Right cardiac atrium (tissue), 5 donors: ENCODE measurements at regions of chr7 and their contacts with region 1.

Region 1: DNA sequence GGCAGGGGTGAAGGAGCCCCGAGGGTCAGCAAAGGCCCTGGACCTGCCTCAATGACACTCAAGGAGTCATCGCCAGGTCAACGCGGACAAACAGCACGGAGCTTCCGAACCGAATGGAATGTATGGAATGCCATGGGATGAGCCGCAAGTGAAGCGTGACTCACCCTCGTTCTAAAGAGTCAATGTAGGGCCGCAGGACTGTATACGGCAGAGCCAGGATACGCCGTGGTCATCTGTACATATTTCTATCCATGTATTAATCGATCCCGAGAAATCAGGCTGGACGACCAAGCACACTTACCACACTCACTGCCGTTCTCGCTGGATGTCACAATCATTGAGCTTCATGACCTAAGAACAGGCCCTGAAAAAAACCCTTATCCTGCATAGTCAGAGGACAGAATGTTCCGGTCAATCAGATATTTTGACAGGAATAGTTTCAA is 4.3 kb downstream of the SNX8 start:
- DNase-seq: no peak
- ATAC-seq: no peak
- H3K4me3 ChIP-seq: no peak overlapping the region
- H3K27ac ChIP-seq: peak overlapping the region; percentile 68
- H3K4me1 ChIP-seq: peaks cover 3% of the 10 kb centered on the region
- H3K27me3 ChIP-seq: no peaks in the 10 kb centered on the region

Region 2: GRCh38 chr7:2241580-2242540 is 68.0 kb before region 1 on chr7 and contains the starts of genes MRM2 and NUDT1:
- intact Hi-C with region 1: loop called in 1 of 4 experiments (anchors 10 kb)
- DNase-seq: peak; percentile 83 to 96 (median 93)
- ATAC-seq: peak; percentile 91
- H3K4me3 ChIP-seq: peak within 1 kb of the TSS; percentile 82
- H3K27ac ChIP-seq: peak within 1 kb of the TSS; percentile 55
- H3K4me1 ChIP-seq: peaks cover 4% of the 10 kb centered on the region
- H3K27me3 ChIP-seq: no peaks in the 10 kb centered on the region
- total RNA-seq, gene MRM2: 19.5 to 24.4 (median 21.9) TPM
- total RNA-seq, gene NUDT1: 10.6 to 17.2 (median 14.6) TPM